ENCODE measurements at regions of chr17 and their contacts with region 1.

Region 1: DNA sequence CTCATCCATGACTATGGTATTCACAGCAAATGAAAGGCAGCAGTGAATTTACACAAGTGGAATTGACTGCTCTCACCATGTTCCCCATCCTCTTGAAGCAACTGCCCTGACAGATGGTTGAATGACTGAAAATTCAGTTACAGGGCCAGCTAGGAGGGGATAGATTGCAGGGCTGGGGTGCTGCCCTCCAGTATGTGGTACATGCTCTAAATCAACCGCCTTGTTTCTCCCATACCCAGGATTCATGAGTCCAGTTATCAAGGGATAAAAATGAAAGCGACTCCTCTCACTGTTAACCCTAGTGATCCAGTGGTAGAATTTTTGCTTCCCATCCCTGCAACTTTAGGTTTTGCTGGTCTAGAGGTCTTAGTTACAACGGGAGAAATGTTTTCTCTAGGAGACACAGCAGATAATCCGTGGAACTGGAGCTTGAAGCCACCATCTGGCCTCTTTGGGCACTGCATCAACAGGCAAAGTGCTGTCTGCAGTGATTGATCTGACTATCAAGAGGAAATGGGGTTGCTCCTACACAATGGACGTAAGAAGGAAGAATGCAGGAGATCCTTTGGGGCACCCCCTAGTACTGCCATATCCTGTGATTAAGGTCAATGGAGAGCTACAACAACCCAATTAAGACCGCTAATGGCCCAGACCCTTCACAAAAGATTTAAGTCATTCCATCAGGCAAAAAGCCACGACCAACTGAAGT is 32.0 kb downstream of the SCPEP1 start:
- DNase-seq: no peak
- H3K4me3 ChIP-seq: no peak overlapping the region
- H3K27ac ChIP-seq: no peak overlapping the region
- H3K4me1 ChIP-seq: peaks cover 0 to 31% (median 18%) of the 10 kb centered on the region in 4 donors
- H3K27me3 ChIP-seq: no peaks in the 10 kb centered on the region
- CTCF ChIP-seq: peak; percentile 39 to 74 (median 44)
- EP300 ChIP-seq: no peak
- POLR2A ChIP-seq: no peak

Region 2: GRCh38 chr17:57051886-57052361 is 42.0 kb after region 1 on chr17:
- intact Hi-C with region 1: loop called (anchors 5 kb)
- DNase-seq: no peak
- H3K4me3 ChIP-seq: no peak overlapping the region
- H3K27ac ChIP-seq: peak overlapping the region in 3 of 4 donors; percentile 16 to 56 (median 55)
- H3K4me1 ChIP-seq: peaks cover 7 to 22% (median 21%) of the 10 kb centered on the region in 4 donors
- H3K27me3 ChIP-seq: no peaks in the 10 kb centered on the region
- CTCF ChIP-seq: no peak
- EP300 ChIP-seq: no peak
- POLR2A ChIP-seq: no peak

Region 3: GRCh38 chr17:57114085-57114673 is 104.3 kb after region 1 on chr17:
- intact Hi-C with region 1: loop called (anchors 5 kb)
- DNase-seq: no peak
- H3K4me3 ChIP-seq: no peak overlapping the region
- H3K27ac ChIP-seq: peak overlapping the region; percentile 8 to 61 (median 31)
- H3K4me1 ChIP-seq: peaks cover 30 to 44% (median 41%) of the 10 kb centered on the region in 4 donors
- H3K27me3 ChIP-seq: no peaks in the 10 kb centered on the region
- CTCF ChIP-seq: peak; percentile 71 to 93 (median 78)
- EP300 ChIP-seq: no peak
- POLR2A ChIP-seq: no peak